Colonic mucosa (tissue), 4 donors: ENCODE measurements at regions of chr12 and their contacts with region 1.

Region 1: GRCh38 chr12:80837348-80837985 is 100.3 kb downstream of the LIN7A start:
- DNase-seq: no peak
- H3K4me3 ChIP-seq: no peak overlapping the region
- H3K27ac ChIP-seq: no peak overlapping the region
- H3K4me1 ChIP-seq: no peaks in the 10 kb centered on the region
- H3K27me3 ChIP-seq: no peaks in the 10 kb centered on the region
- CTCF ChIP-seq: peak; percentile 52

Region 2: GRCh38 chr12:80230068-80230467 is 607.4 kb before region 1 on chr12:
- intact Hi-C with region 1: no loop called
- DNase-seq: no peak
- H3K4me3 ChIP-seq: no peak overlapping the region
- H3K27ac ChIP-seq: no peak overlapping the region
- H3K4me1 ChIP-seq: no peaks in the 10 kb centered on the region
- H3K27me3 ChIP-seq: no peaks in the 10 kb centered on the region
- CTCF ChIP-seq: no peak

Region 3: DNA sequence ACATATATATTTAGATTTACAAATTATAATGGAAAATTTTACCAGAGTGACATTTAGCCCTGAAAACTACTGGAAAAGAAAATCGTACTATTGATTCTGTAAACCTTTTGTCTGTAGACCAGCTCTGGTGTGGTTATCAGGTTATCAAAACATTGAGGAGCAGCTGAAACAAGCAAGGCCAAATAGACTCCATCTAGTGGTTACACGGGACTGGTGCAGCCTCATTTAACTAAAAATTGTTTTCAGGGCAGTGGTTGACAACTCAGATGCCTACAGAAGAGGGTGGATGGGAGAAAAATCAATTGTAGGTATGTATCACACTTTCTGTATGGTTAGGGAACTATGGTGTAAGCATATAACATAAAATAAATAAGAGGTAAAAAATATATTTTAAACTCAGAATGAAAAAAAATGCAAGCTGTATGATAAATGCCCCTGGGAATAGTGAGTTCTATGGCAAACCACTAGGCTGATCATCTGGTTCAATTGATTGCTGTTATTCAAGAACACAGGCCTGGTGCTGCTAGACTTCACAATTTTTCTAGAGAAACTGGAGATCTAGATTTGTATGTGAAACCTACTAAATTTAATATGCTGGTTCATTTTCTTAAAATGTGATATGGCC is 291.6 kb after region 1 on chr12:
- intact Hi-C with region 1: loop called (anchors 10 kb)
- DNase-seq: peak; percentile 23
- H3K4me3 ChIP-seq: no peak overlapping the region
- H3K27ac ChIP-seq: no peak overlapping the region
- H3K4me1 ChIP-seq: no peaks in the 10 kb centered on the region
- H3K27me3 ChIP-seq: no peaks in the 10 kb centered on the region
- CTCF ChIP-seq: peak; percentile 53

Region 4: DNA sequence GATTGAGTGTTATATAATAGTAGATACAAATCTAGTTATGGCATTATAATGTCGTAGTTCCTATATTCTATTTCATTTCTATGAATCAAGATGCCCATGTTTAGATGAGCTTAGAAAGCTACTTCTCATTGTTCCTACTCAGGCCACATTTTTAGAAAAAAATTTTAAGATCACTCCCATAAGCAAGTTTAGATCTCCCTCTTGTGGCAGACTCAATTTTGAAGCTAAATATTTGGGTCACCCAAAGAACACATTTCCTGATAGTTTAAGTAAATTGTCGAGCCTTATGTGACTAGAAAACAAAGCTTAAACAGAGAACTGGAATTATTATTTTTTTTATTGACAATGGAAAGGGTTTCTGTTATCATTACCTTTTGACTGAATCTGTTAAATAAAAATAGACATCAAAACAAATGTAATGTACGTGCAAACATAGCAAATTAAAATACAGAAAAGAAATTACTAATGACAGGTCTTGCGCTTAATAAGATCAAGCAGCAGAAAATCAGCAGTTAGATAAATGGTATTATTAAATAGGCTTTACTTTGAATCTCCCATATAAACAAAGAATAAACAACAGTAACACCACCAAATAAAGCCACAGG is 420.6 kb after region 1 on chr12:
- intact Hi-C with region 1: loop called (anchors 5 kb)
- DNase-seq: no peak
- H3K4me3 ChIP-seq: no peak overlapping the region
- H3K27ac ChIP-seq: no peak overlapping the region
- H3K4me1 ChIP-seq: no peaks in the 10 kb centered on the region
- H3K27me3 ChIP-seq: no peaks in the 10 kb centered on the region
- CTCF ChIP-seq: no peak